Posterior cingulate gyrus (tissue), 11 donors: ENCODE measurements at regions of chrX and their contacts with region 1.

Region 1: DNA sequence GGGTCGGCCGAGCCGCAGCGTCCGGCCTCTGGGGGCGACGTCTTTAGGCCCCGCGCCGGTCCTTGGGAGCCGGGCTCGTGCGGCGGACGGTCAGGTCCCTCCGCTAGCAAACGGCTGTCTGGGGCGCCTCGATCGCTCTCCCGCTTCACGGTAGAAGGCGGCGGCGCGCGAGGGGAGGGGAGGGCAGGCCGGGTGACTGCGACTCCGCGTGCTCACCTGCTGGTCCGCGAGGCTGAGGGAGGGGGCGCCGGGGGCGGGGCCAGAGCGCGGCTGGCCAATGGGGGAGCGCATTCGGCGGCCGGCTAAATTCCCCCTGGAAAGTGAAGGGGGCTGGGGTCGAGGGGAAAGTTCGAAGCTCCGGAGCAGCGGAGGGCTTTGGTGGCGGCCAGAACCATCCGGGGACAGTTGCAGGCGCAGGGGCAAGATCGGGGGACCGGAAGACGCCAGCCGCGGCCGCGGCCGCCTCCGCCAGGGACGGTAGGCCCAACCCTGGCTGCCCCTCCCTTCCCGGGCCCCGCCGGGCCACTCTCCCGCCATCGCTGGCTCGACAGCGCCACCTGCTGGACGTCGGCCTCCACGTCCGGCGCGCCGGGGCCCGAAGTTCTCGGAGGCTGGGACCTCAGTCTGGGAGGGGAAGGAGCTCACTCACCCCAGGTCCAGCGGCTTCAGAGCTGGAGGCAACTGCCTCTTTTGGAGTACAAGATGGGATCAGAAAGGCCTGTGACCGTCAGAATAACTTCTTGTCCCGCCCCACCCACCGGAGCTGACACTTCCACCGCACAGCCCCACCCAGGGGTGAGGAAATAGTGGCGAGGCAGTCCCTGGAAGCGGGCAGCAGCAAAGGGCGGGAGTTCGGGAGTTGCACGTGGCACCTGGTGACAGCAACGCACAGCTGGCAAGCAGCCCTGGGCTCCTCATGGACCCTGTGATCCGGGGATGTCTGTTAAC is 49.9 kb downstream of the ELF4 start:
- DNase-seq: peak; percentile 56 to 96 (median 79)

Region 2: DNA sequence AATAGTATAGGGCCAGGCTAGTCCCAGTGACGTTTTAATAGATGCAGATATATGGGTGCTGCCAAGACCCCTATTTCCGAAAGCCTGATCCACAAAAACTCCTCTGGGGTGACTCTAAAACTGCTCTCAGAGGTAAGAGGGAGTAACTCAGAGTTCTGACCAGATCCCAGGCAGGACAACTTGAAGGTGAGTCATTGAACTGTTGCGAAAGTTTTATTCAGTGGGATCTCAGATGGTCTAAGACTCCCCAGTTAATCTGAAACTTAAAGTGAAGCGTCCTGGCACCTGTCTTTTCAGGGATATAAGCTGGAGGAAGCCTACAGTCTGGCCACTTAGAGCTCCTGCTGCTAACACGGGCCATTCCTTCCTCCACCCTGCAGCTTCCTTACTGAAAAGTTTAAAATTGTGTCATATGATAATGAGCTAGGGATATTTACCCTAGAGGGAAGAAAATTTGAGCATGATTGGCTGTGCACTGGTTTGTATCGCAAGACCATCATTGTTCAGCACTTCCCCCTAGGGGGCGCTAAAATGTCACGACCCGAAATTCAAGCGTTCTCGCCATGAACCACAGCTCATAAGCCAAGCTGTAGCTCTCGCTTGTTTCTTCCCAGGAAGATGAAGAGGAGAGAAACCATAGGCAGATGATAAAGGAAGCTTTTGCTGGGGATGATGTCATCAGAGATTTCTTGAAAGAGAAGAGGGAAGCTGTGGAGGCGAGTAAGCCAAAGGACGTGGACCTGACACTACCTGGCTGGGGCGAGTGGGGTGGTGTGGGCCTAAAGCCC is 134.9 kb before region 1 on chrX:
- intact Hi-C with region 1: loop called (anchors 1 kb)
- DNase-seq: peak in 8 of 10 donors; percentile 51 to 96 (median 72)